Naive thymus-derived CD4-positive, alpha-beta T cell (primary cell): ENCODE measurements at regions of chr22 and their contacts with region 1.

Region 1: DNA sequence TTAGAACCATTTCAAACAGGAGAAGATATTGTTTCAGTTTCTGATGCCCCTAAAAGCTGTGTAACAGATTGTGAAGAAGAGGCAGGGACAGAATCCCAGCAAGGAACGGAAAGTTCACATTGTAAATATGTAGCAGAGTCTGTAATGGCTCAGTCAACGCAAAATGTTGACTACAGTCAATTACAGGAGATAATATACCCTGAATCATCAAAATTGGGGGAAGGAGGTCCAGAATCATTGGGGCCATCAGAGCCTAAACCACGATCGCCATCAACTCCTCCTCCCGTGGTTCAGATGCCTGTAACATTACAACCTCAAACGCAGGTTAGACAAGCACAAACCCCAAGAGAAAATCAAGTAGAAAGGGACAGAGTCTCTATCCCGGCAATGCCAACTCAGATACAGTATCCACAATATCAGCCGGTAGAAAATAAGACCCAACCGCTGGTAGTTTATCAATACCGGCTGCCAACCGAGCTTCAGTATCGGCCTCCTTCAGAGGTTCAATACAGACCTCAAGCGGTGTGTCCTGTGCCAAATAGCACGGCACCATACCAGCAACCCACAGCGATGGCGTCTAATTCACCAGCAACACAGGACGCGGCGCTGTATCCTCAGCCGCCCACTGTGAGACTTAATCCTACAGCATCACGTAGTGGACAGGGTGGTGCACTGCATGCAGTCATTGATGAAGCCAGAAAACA is 40.8 kb downstream of the IGLL1 start:
- DNase-seq: peak; percentile 41 to 73 (median 65)
- ATAC-seq: peak; percentile 100
- H3K4me3 ChIP-seq: no peak overlapping the region
- H3K4me3 Mint-ChIP-seq: peak overlapping the region in 6 of 10 donors; percentile 26 to 62 (median 46)
- H3K27ac ChIP-seq: no peak overlapping the region
- H3K27ac Mint-ChIP-seq: no peak overlapping the region
- H3K4me1 ChIP-seq: peaks cover 3 to 5% of the 10 kb centered on the region in 2 donors
- H3K4me1 Mint-ChIP-seq: peaks cover 0 to 11% (median 10%) of the 10 kb centered on the region in 7 donors
- H3K27me3 ChIP-seq: no peaks in the 10 kb centered on the region
- H3K27me3 Mint-ChIP-seq: peaks cover 0 to 26% (median 0%) of the 10 kb centered on the region in 5 donors

Region 2: GRCh38 chr22:23315341-23315917 is 223.9 kb before region 1 on chr22:
- CTCF ChIA-PET with region 1: no interaction called
- POLR2A ChIA-PET with region 1: no interaction called
- intact Hi-C with region 1: loop called in 1 of 2 experiments (anchors 2 kb)
- DNase-seq: peak in 8 of 9 donors; percentile 24 to 56 (median 39)
- ATAC-seq: no peak
- H3K4me3 ChIP-seq: no peak overlapping the region
- H3K4me3 Mint-ChIP-seq: no peak overlapping the region
- H3K27ac ChIP-seq: no peak overlapping the region
- H3K27ac Mint-ChIP-seq: no peak overlapping the region
- H3K4me1 ChIP-seq: no peaks in the 10 kb centered on the region
- H3K4me1 Mint-ChIP-seq: no peaks in the 10 kb centered on the region
- H3K27me3 ChIP-seq: no peaks in the 10 kb centered on the region
- H3K27me3 Mint-ChIP-seq: no peaks in the 10 kb centered on the region

Region 3: DNA sequence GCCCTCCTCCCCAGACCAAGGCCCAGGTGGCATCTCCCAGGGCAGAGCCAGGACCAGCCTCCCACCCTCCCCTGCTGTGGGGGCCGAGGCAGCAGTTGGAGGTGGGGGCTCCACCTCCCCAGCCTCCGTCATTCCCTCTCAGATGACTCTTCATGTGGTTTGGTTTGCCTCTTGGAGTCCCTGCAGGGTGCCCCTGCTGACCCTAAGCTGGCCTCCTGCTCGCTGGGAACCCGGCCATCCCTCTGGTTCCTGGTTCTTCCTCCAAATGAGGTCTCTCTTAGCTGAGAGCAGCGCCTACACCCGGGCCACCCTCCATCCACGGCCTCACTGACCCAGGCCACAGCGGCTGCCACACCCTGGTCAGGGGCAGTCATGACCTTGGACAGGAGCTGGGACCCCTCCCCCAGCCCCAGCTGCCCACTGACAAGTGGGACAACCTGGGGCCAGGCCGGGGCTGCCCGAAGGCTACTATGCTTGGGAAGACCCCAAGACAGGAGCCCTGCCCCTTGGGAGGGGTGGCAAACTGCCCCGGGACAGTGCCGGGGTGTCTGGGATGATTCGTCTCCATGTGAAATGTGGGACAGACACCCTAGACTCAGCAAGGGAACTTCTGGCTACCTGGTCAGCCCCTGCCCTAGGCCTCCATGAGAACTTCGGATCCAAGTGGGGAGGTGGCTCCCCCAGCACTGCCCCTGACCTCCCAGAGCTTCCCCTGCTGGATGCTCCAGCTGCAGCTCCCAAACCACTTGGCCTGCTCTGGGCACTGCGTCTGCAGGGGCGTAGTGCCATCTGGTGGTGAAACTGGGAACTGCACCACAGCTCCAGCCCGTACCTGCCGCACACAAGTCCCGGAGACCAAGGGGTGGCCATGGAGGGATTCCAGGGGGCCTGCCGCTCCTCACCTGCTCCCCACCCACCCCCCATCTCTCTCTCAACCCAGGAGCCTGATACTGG is 153.7 kb before region 1 on chr22:
- CTCF ChIA-PET with region 1: no interaction called
- POLR2A ChIA-PET with region 1: no interaction called
- intact Hi-C with region 1: loop called in 1 of 2 experiments (anchors 1 kb)
- DNase-seq: peak; percentile 48 to 84 (median 71)
- ATAC-seq: peak; percentile 84
- H3K4me3 ChIP-seq: no peak overlapping the region
- H3K4me3 Mint-ChIP-seq: no peak overlapping the region
- H3K27ac ChIP-seq: no peak overlapping the region
- H3K27ac Mint-ChIP-seq: no peak overlapping the region
- H3K4me1 ChIP-seq: no peaks in the 10 kb centered on the region
- H3K4me1 Mint-ChIP-seq: no peaks in the 10 kb centered on the region
- H3K27me3 ChIP-seq: no peaks in the 10 kb centered on the region
- H3K27me3 Mint-ChIP-seq: no peaks in the 10 kb centered on the region

Region 4: DNA sequence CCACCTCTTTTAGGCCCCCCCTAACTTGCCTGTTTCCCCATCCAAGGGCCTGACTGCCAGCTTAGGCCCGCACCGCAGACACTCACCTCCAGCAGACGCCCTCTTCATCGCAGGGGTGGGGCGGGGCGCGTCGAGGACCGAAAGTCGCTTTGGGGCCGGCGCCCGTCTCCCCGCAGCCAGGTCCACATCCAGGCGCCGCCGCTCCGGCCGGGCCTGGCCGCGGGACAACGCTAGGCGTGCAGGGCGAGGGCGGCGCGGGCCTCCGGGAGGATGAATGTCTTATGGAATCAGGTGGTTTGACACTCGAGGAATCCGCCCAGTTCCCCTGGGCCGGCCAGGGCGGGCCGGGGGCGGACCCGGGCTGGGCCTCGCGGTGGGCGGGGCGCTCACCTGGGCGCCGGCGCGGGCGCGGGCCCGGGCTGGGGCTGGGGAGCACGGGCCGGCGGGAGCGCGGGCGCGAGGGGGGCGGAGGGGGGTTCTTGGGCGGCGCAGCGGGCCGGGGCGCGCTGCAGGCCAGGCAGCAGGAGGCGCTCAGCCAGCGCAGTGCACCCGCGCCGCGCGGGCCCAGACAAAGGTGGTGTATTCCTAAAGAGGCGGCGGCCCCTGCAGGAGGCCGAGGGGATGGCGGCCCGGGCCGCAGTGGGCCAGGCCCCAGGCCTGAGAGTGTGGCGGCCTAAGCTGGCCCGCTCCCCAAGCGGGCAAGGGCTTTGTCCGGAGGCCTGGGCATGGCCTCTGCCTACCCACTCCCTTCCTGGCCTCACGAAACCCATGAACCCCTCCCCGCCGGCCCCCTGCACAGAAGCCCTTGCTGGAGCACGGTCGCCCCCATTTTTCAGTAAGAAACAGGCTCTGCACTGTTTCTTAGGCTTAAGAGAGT is 136.8 kb before region 1 on chr22:
- CTCF ChIA-PET with region 1: no interaction called
- POLR2A ChIA-PET with region 1: no interaction called
- intact Hi-C with region 1: loop called (anchors 1 kb)
- DNase-seq: peak; percentile 14 to 51 (median 36)
- ATAC-seq: peak; percentile 80
- H3K4me3 ChIP-seq: no peak overlapping the region
- H3K4me3 Mint-ChIP-seq: peak overlapping the region in 6 of 10 donors; percentile 41 to 67 (median 48)
- H3K27ac ChIP-seq: no peak overlapping the region
- H3K27ac Mint-ChIP-seq: no peak overlapping the region
- H3K4me1 ChIP-seq: no peaks in the 10 kb centered on the region
- H3K4me1 Mint-ChIP-seq: no peaks in the 10 kb centered on the region
- H3K27me3 ChIP-seq: no peaks in the 10 kb centered on the region
- H3K27me3 Mint-ChIP-seq: no peaks in the 10 kb centered on the region

Region 5: GRCh38 chr22:23521441-23522113 is 17.7 kb before region 1 on chr22:
- CTCF ChIA-PET with region 1: no interaction called
- POLR2A ChIA-PET with region 1: interaction called, 3 read pairs
- intact Hi-C with region 1: loop called in 1 of 2 experiments (anchors 1 kb)
- DNase-seq: peak in 8 of 9 donors; percentile 25 to 66 (median 36)
- ATAC-seq: peak; percentile 92
- H3K4me3 ChIP-seq: peak overlapping the region; percentile 9
- H3K4me3 Mint-ChIP-seq: peak overlapping the region; percentile 35 to 83 (median 74)
- H3K27ac ChIP-seq: no peak overlapping the region
- H3K27ac Mint-ChIP-seq: peak overlapping the region in 2 of 9 donors; percentile 31 to 52
- H3K4me1 ChIP-seq: peaks cover 5 to 7% of the 10 kb centered on the region in 2 donors
- H3K4me1 Mint-ChIP-seq: peaks cover 0 to 7% (median 4%) of the 10 kb centered on the region in 7 donors
- H3K27me3 ChIP-seq: peaks cover 0 to 6% of the 10 kb centered on the region in 2 donors
- H3K27me3 Mint-ChIP-seq: peaks cover 22 to 47% (median 30%) of the 10 kb centered on the region in 5 donors

Region 6: DNA sequence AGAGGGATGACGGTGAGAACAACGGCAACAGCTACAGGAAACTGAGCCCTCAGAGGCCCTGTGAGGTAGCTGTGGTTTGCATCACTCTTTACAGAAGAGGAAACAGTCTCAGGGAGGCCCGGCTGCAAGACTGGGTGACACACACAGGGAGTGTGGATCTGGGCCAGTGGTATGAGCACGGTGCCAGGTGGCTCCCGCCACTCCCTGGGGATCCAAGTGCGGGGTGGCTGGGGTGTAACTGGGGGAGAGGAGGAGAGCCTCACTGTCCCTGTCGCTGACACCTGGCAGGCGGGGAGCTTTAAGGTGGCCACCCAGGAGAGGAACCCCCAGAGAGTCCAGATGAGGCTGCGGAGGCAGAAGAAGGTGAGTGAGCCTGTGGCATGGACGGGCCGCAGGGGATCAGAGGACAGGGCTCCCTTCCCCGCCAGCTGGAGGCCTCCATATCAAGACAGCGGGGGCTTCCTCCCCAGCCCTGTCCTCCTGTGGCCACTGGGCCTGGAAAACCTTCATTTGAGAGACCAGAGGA is 157.1 kb after region 1 on chr22:
- CTCF ChIA-PET with region 1: no interaction called
- POLR2A ChIA-PET with region 1: no interaction called
- intact Hi-C with region 1: no loop called
- DNase-seq: peak; percentile 60 to 91 (median 86)
- ATAC-seq: peak; percentile 99
- H3K4me3 ChIP-seq: peak overlapping the region; percentile 71
- H3K4me3 Mint-ChIP-seq: peak overlapping the region; percentile 94 to 100 (median 98)
- H3K27ac ChIP-seq: peak overlapping the region; percentile 99
- H3K27ac Mint-ChIP-seq: peak overlapping the region; percentile 99 to 100 (median 100)
- H3K4me1 ChIP-seq: peaks cover 28 to 38% of the 10 kb centered on the region in 2 donors
- H3K4me1 Mint-ChIP-seq: peaks cover 37 to 64% (median 51%) of the 10 kb centered on the region in 7 donors
- H3K27me3 ChIP-seq: no peaks in the 10 kb centered on the region
- H3K27me3 Mint-ChIP-seq: no peaks in the 10 kb centered on the region

Region 7: DNA sequence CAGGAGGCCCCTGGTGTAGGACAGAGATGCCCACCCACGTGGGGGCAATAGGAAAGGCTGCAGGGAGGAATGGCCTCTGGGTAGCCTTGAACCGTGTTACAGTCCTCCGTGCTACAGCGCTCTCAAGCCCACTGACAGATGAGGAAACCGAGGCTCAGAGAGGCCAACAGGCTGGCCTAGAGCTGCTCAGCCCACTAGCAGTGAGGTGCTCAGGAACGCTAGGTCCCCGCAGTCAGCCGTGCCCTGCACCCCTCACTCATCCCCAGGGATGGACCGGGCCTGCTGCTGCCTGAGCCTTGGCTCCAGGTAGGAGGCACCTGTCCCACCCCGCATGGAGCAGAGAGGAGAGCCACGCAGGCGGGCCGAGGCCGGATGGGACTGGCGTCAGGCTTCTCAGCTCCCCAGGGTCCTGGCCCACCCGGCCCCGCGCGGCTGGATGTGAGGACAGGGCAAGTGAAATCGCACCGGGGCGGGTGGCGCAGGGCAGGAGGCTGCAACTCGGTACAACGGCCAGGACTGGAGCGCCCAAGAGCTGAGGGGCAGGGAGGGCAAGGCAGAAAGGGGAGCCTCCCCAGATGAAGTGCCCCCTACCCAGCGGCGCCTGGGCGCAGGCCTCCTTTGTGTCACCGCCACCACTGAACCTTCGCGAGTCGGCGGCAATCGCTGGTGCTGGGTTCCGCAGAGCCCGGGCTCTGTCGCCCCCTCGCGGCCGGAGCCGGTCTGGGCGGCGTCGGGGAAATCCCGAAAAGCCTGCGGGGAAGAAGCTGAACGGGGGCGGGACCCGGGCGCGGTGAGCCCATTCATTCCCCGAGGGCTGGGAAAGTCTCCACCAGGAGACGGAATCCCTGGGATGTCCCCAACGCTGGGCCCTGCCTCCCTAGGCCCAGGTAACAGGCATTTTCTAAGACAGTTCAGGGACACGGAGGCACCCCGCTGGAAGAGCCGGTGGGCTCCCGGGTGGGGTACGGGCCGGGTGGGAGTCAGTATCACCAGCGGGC is 310.0 kb after region 1 on chr22:
- CTCF ChIA-PET with region 1: no interaction called
- POLR2A ChIA-PET with region 1: no interaction called
- intact Hi-C with region 1: loop called (anchors 1 to 5 kb)
- DNase-seq: peak; percentile 70 to 96 (median 84)
- ATAC-seq: peak; percentile 98
- H3K4me3 ChIP-seq: no peak overlapping the region
- H3K4me3 Mint-ChIP-seq: peak overlapping the region in 3 of 10 donors; percentile 12 to 49 (median 23)
- H3K27ac ChIP-seq: no peak overlapping the region
- H3K27ac Mint-ChIP-seq: no peak overlapping the region
- H3K4me1 ChIP-seq: no peaks in the 10 kb centered on the region
- H3K4me1 Mint-ChIP-seq: peaks cover 0 to 4% (median 0%) of the 10 kb centered on the region in 7 donors
- H3K27me3 ChIP-seq: no peaks in the 10 kb centered on the region
- H3K27me3 Mint-ChIP-seq: peaks cover 0 to 13% (median 0%) of the 10 kb centered on the region in 5 donors